ENCODE measurements at regions of chr7 and their contacts with region 1.

Region 1: DNA sequence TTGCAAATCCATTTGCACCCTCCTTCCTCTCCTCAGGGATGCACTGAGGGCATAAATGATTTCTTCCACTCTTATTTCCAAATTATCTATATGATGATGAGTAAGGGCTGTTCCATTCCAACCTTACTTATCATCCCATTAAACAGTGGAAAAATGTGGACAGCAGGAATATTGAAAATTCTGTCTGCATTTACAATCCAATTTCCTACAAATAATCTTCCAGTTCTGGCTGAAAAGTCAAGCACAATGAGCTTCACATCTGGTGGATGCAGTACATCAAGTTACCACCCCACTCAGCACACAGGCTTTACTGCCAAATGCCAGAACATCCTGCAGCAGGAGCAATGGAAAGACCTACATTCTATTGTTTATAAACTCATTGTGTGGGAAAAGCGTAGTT is 345.0 kb upstream of the STEAP1 start:
- DNase-seq: no peak
- ATAC-seq: no peak
- H3K4me3 ChIP-seq: no peak overlapping the region
- H3K27ac ChIP-seq: no peak overlapping the region
- H3K4me1 ChIP-seq: no peaks in the 10 kb centered on the region
- H3K27me3 ChIP-seq: no peaks in the 10 kb centered on the region
- CTCF ChIP-seq: no peak

Region 2: DNA sequence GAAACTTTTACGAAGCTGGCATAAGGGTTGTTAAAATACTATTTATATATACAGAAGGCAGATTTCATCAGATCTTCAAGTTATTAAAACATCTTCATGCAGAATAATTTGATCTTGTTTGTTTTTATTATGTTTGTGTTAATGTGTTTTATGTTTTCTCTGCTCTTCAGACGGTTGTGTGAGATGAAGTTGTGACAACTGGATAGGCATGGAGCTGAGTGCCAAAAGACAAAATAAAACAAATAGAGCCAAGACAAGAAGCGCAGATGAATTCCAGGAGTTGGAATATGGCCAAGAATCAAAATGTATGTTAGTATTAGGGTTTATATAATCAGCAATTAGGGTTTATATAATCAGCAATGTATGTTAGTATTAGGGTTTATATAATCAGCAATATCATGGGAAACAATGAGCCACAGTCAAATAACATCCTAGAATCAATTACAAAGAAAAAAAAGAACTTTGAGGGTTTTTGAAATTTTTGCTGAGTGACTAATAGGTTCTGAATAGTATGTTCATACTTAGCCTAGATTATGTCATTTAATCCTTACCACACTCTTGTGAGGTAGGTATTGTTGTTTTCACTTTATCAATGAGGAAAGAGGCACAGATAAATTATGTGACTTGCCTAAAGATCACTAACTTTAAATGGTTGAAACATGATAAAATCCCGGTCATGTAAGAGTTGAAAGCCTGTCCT is 143.0 kb before region 1 on chr7:
- intact Hi-C with region 1: no loop called
- DNase-seq: no peak
- ATAC-seq: no peak
- H3K4me3 ChIP-seq: no peak overlapping the region
- H3K27ac ChIP-seq: no peak overlapping the region
- H3K4me1 ChIP-seq: no peaks in the 10 kb centered on the region
- H3K27me3 ChIP-seq: no peaks in the 10 kb centered on the region
- CTCF ChIP-seq: no peak

Region 3: DNA sequence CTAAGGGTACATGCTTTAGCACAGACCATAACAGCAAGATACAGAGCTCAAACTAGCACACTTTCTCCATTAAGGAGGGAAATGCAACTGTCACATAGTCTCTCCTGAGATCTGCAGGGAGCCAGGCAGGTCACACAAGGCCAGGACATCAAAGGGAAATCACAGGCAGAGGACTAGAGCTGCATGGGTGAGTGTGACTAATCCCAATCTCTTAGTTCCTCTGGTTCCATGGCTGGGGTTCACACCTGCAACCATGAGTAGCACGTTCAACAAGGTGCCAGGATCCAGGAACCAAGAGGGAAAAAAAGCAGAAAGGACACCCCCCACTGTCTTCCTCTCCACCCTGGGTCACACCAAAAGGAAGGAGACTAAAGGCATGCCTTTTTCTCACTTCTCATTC is 48.5 kb after region 1 on chr7:
- intact Hi-C with region 1: loop called in 1 of 2 experiments (anchors 10 kb)
- DNase-seq: no peak
- ATAC-seq: no peak
- H3K4me3 ChIP-seq: no peak overlapping the region
- H3K27ac ChIP-seq: no peak overlapping the region
- H3K4me1 ChIP-seq: no peaks in the 10 kb centered on the region
- H3K27me3 ChIP-seq: no peaks in the 10 kb centered on the region
- CTCF ChIP-seq: no peak

Region 4: GRCh38 chr7:89988074-89988473 is 178.8 kb after region 1 on chr7:
- intact Hi-C with region 1: no loop called
- DNase-seq: no peak
- ATAC-seq: no peak
- H3K4me3 ChIP-seq: no peak overlapping the region
- H3K27ac ChIP-seq: no peak overlapping the region
- H3K4me1 ChIP-seq: no peaks in the 10 kb centered on the region
- H3K27me3 ChIP-seq: no peaks in the 10 kb centered on the region
- CTCF ChIP-seq: no peak

Region 5: DNA sequence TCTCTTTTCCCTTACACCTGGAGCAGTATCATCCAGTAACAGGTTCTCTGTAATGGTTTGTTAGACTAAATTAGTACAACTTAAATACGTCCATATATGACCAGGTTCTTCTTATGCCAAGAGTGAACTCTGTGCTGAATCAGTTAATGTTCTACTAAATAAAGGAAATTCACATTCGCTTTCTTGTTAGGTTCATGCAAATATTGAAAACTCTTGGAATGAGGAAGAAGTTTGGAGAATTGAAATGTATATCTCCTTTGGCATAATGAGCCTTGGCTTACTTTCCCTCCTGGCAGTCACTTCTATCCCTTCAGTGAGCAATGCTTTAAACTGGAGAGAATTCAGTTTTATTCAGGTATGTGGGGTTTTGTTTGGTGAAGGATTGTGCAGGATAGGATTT is 420.4 kb after region 1 on chr7:
- intact Hi-C with region 1: no loop called
- DNase-seq: no peak
- ATAC-seq: no peak
- H3K4me3 ChIP-seq: no peak overlapping the region
- H3K27ac ChIP-seq: no peak overlapping the region
- H3K4me1 ChIP-seq: no peaks in the 10 kb centered on the region
- H3K27me3 ChIP-seq: no peaks in the 10 kb centered on the region
- CTCF ChIP-seq: no peak

Measured in left lung (tissue), 14 donors.